ENCODE measurements at regions of chr12 and their contacts with region 1.

Region 1: GRCh38 chr12:69879041-69879960 is 54.3 kb downstream of the MYRFL start:
- DNase-seq: peak; percentile 74
- ATAC-seq: peak; percentile 82
- H3K4me3 ChIP-seq: no peak overlapping the region
- H3K4me3 Mint-ChIP-seq: no peak overlapping the region
- H3K27ac ChIP-seq: no peak overlapping the region
- H3K27ac Mint-ChIP-seq: peak overlapping the region; percentile 50
- H3K4me1 ChIP-seq: peaks cover 4% of the 10 kb centered on the region in 2 donors
- H3K4me1 Mint-ChIP-seq: peaks cover 5% of the 10 kb centered on the region
- H3K27me3 ChIP-seq: peaks cover 0 to 9% (median 2%) of the 10 kb centered on the region in 4 experiments
- H3K27me3 Mint-ChIP-seq: peaks cover 27% of the 10 kb centered on the region
- CTCF ChIP-seq: peak; percentile 89

Region 2: GRCh38 chr12:69070319-69071090 is 808.8 kb before region 1 on chr12:
- CTCF ChIA-PET with region 1: no interaction called
- POLR2A ChIA-PET with region 1: no interaction called
- intact Hi-C with region 1: no loop called
- DNase-seq: peak; percentile 71
- ATAC-seq: peak; percentile 78
- H3K4me3 ChIP-seq: no peak overlapping the region
- H3K4me3 Mint-ChIP-seq: no peak overlapping the region
- H3K27ac ChIP-seq: no peak overlapping the region
- H3K27ac Mint-ChIP-seq: no peak overlapping the region
- H3K4me1 ChIP-seq: no peaks in the 10 kb centered on the region
- H3K4me1 Mint-ChIP-seq: no peaks in the 10 kb centered on the region
- H3K27me3 ChIP-seq: peaks cover 0 to 3% (median 0%) of the 10 kb centered on the region in 4 experiments
- H3K27me3 Mint-ChIP-seq: peaks cover 23% of the 10 kb centered on the region
- CTCF ChIP-seq: peak; percentile 87

Region 3: GRCh38 chr12:70576346-70577282 is 697.3 kb after region 1 on chr12:
- CTCF ChIA-PET with region 1: interaction called, 75 read pairs
- POLR2A ChIA-PET with region 1: no interaction called
- intact Hi-C with region 1: loop called (anchors 1 kb)
- DNase-seq: peak; percentile 66
- ATAC-seq: peak; percentile 43
- H3K4me3 ChIP-seq: no peak overlapping the region
- H3K4me3 Mint-ChIP-seq: no peak overlapping the region
- H3K27ac ChIP-seq: no peak overlapping the region
- H3K27ac Mint-ChIP-seq: no peak overlapping the region
- H3K4me1 ChIP-seq: no peaks in the 10 kb centered on the region
- H3K4me1 Mint-ChIP-seq: no peaks in the 10 kb centered on the region
- H3K27me3 ChIP-seq: peaks cover 0 to 2% (median 0%) of the 10 kb centered on the region in 4 experiments
- H3K27me3 Mint-ChIP-seq: peaks cover 4% of the 10 kb centered on the region
- CTCF ChIP-seq: peak; percentile 78

Region 4: GRCh38 chr12:70719672-70720420 is 840.5 kb after region 1 on chr12:
- CTCF ChIA-PET with region 1: interaction called, 14 read pairs
- POLR2A ChIA-PET with region 1: no interaction called
- intact Hi-C with region 1: loop called (anchors 1 kb)
- DNase-seq: peak; percentile 35
- ATAC-seq: no peak
- H3K4me3 ChIP-seq: no peak overlapping the region
- H3K4me3 Mint-ChIP-seq: no peak overlapping the region
- H3K27ac ChIP-seq: no peak overlapping the region
- H3K27ac Mint-ChIP-seq: no peak overlapping the region
- H3K4me1 ChIP-seq: no peaks in the 10 kb centered on the region
- H3K4me1 Mint-ChIP-seq: peaks cover 4% of the 10 kb centered on the region
- H3K27me3 ChIP-seq: peaks cover 0 to 2% (median 0%) of the 10 kb centered on the region in 4 experiments
- H3K27me3 Mint-ChIP-seq: peaks cover 20% of the 10 kb centered on the region
- CTCF ChIP-seq: peak; percentile 74

Region 5: GRCh38 chr12:70730675-70731180 is 851.4 kb after region 1 on chr12:
- CTCF ChIA-PET with region 1: interaction called, 54 read pairs
- POLR2A ChIA-PET with region 1: no interaction called
- intact Hi-C with region 1: loop called (anchors 1 kb)
- DNase-seq: no peak
- ATAC-seq: no peak
- H3K4me3 ChIP-seq: no peak overlapping the region
- H3K4me3 Mint-ChIP-seq: no peak overlapping the region
- H3K27ac ChIP-seq: no peak overlapping the region
- H3K27ac Mint-ChIP-seq: no peak overlapping the region
- H3K4me1 ChIP-seq: no peaks in the 10 kb centered on the region
- H3K4me1 Mint-ChIP-seq: no peaks in the 10 kb centered on the region
- H3K27me3 ChIP-seq: no peaks in the 10 kb centered on the region
- H3K27me3 Mint-ChIP-seq: peaks cover 6% of the 10 kb centered on the region
- CTCF ChIP-seq: no peak

Measured in B cell (primary cell).